Gastrocnemius medialis (tissue), 4 donors: ENCODE measurements at regions of chr13 and their contacts with region 1.

Region 1: GRCh38 chr13:80342471-80343380 is 1.8 kb upstream of the SPRY2 start:
- DNase-seq: peak; percentile 64 to 78
- ATAC-seq: peak; percentile 42 to 46
- H3K4me3 ChIP-seq: peak overlapping the region; percentile 69 to 94 (median 90)
- H3K27ac ChIP-seq: peak overlapping the region; percentile 91 to 99 (median 95)
- H3K4me1 ChIP-seq: peaks cover 17 to 30% of the 10 kb centered on the region in 2 donors
- H3K27me3 ChIP-seq: no peaks in the 10 kb centered on the region
- CTCF ChIP-seq: peak; percentile 96 to 99 (median 98)
- POLR2A ChIP-seq: peak; percentile 11 to 48

Region 2: DNA sequence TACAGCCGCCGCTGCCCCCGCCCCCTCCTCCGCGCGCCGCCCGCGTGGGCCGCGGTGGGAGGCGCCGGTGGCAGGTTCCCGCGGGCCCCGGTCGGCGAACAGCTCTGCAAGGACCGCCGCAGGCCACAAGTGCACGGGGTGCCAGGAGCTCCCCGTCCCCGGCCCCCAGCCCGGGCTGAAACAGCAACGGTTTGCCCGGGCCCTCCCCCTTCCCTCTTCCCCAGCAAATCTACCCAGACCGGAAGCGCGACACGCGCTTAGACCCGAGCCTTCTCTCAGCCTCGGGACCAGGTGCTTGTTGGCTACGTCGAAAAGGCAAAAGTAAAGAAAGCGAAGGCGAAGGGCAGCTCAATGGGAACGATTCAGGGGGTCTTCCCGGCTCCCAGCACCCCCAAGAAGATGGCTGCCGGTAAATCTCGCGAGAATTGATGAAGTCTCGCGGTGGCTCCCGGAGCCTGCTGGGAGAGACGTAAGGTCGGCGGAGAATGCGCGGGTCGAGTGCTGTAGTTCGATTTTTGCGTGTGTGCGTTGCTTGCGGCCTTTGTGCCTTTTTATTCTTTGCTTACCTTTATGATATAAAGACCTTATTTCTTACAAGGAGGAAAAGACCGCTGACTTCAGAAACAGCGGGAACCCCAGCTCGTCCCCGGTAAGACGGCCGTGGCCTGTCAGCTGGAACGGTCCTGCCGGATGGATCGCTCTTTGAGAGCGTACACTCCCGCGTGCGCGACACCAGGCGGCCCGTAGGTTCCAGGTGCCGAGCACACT is 936.7 kb before region 1 on chr13 and contains the start of gene RBM26:
- in situ Hi-C with region 1: loop called in 2 of 4 experiments (anchors 25 kb)
- intact Hi-C with region 1: loop called (anchors 5 kb)
- DNase-seq: peak; percentile 88 to 90
- ATAC-seq: peak; percentile 92 to 94
- H3K4me3 ChIP-seq: peak within 1 kb of the TSS; percentile 87 to 96 (median 94)
- H3K27ac ChIP-seq: peak within 1 kb of the TSS; percentile 94 to 98 (median 96)
- H3K4me1 ChIP-seq: peaks cover 48 to 54% of the 10 kb centered on the region in 2 donors
- H3K27me3 ChIP-seq: no peaks in the 10 kb centered on the region
- CTCF ChIP-seq: peak in 2 of 5 experiments; percentile 18 to 19
- POLR2A ChIP-seq: peak; percentile 51 to 70
- total RNA-seq, gene RBM26: 14.9 to 44.8 (median 23.1) TPM

Region 3: DNA sequence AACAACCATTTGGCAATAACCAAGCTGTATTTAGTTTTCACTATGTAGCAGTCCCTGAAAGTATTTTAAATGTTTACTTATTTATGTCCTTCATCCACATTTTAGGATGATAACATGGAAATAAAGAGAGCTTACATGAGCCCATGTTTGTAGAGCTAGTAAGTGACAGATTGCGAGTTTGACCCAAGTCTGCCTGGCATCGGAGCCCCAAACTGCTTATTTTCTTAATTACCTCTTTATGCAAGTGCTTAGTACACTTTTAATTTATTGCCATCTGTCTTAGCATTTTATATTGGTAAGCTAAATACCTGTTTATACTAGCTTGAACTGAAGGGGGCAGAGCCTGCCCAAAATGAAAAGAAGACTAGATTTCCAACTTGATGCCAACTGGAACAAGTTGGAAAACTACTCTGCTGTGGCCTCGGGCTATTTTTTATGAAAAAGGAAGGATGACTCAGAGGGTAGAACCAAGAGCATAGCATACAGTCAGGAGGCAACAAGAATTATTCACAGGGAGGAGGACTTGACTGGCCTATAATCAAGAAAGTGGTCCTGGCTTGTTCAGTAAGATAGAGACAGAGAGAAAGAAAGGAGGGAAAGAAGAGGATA is 711.6 kb before region 1 on chr13:
- in situ Hi-C with region 1: loop called in 2 of 4 experiments (anchors 5 to 10 kb)
- intact Hi-C with region 1: loop called (anchors 5 kb)
- DNase-seq: peak; percentile 5 to 38
- ATAC-seq: peak; percentile 99
- H3K4me3 ChIP-seq: no peak overlapping the region
- H3K27ac ChIP-seq: peak overlapping the region in 3 of 4 donors; percentile 52 to 65 (median 61)
- H3K4me1 ChIP-seq: peaks cover 4 to 8% of the 10 kb centered on the region in 2 donors
- H3K27me3 ChIP-seq: no peaks in the 10 kb centered on the region
- CTCF ChIP-seq: peak in 4 of 5 experiments; percentile 19 to 58 (median 56)
- POLR2A ChIP-seq: no peak

Region 4: DNA sequence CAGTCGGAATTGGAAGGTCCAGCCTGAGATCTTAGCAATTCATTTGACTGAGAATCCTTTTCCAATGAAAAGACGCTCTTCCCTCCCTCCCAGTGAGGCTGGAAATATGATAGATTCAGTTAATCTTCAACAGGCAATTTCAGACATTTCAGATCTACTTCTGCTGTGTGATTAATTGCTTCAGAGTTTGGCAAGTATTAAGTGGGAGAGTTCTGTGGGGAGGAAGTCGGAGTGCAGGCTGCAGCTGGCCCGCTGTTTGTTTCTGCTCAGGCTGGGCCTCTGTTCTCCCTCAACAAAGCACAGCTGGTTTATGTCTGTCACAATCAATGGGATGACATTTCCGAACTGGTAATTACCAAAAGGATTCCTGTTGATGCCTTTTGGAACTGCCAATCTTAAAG is 683.6 kb before region 1 on chr13:
- in situ Hi-C with region 1: no loop called
- intact Hi-C with region 1: loop called (anchors 1 kb)
- DNase-seq: peak; percentile 58 to 77
- ATAC-seq: peak; percentile 91 to 94
- H3K4me3 ChIP-seq: no peak overlapping the region
- H3K27ac ChIP-seq: peak overlapping the region; percentile 74 to 90 (median 83)
- H3K4me1 ChIP-seq: peaks cover 49 to 51% of the 10 kb centered on the region in 2 donors
- H3K27me3 ChIP-seq: no peaks in the 10 kb centered on the region
- CTCF ChIP-seq: no peak
- POLR2A ChIP-seq: no peak

Region 5: DNA sequence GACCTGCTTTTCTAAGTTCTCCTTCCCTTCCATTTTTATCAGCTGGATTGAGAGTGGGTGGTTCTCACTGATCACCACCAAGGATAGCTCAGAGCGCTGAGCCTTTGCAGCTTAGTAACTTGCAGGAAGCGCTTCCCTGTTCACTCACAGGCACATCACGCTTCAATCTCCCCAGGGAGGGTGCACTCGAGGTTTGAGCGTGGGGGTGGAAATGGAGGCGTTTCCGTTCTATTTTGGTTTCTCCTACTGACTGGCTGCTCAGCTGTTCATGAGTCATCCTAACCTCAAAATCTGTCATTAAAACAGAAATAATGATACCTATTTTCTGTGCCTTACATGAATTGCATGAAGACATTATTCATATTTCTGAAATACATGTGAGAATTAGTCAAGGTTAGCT is 293.9 kb before region 1 on chr13:
- in situ Hi-C with region 1: no loop called
- intact Hi-C with region 1: loop called (anchors 5 kb)
- DNase-seq: peak; percentile 89 to 90
- ATAC-seq: peak; percentile 100
- H3K4me3 ChIP-seq: no peak overlapping the region
- H3K27ac ChIP-seq: peak overlapping the region; percentile 44 to 60 (median 58)
- H3K4me1 ChIP-seq: peaks cover 23 to 27% of the 10 kb centered on the region in 2 donors
- H3K27me3 ChIP-seq: no peaks in the 10 kb centered on the region
- CTCF ChIP-seq: no peak
- POLR2A ChIP-seq: no peak

Region 6: GRCh38 chr13:80177327-80177726 is 165.4 kb before region 1 on chr13:
- in situ Hi-C with region 1: no loop called
- intact Hi-C with region 1: no loop called
- DNase-seq: no peak
- ATAC-seq: no peak
- H3K4me3 ChIP-seq: no peak overlapping the region
- H3K27ac ChIP-seq: no peak overlapping the region
- H3K4me1 ChIP-seq: no peaks in the 10 kb centered on the region
- H3K27me3 ChIP-seq: no peaks in the 10 kb centered on the region
- CTCF ChIP-seq: no peak
- POLR2A ChIP-seq: no peak

Region 7: GRCh38 chr13:80363890-80364503 is 21.3 kb after region 1 on chr13:
- in situ Hi-C with region 1: no loop called
- intact Hi-C with region 1: loop called (anchors 1 kb)
- DNase-seq: no peak
- ATAC-seq: peak; percentile 43 to 60
- H3K4me3 ChIP-seq: peak overlapping the region; percentile 29 to 38 (median 36)
- H3K27ac ChIP-seq: peak overlapping the region in 3 of 4 donors; percentile 26 to 40 (median 29)
- H3K4me1 ChIP-seq: peaks cover 9 to 13% of the 10 kb centered on the region in 2 donors
- H3K27me3 ChIP-seq: no peaks in the 10 kb centered on the region
- CTCF ChIP-seq: peak; percentile 46 to 87 (median 61)
- POLR2A ChIP-seq: no peak

Region 8: GRCh38 chr13:81017513-81018152 is 674.9 kb after region 1 on chr13:
- in situ Hi-C with region 1: no loop called
- intact Hi-C with region 1: loop called (anchors 10 kb)
- DNase-seq: no peak
- ATAC-seq: peak in 1 of 2 donors; percentile 45
- H3K4me3 ChIP-seq: peak overlapping the region in 3 of 4 donors; percentile 4 to 9 (median 4)
- H3K27ac ChIP-seq: no peak overlapping the region
- H3K4me1 ChIP-seq: no peaks in the 10 kb centered on the region
- H3K27me3 ChIP-seq: no peaks in the 10 kb centered on the region
- CTCF ChIP-seq: peak; percentile 36 to 58 (median 47)
- POLR2A ChIP-seq: no peak